ENCODE measurements at regions of chr7 and their contacts with region 1.

Region 1: GRCh38 chr7:127253281-127254162 is 781 bp upstream of the GRM8 start:
- DNase-seq: peak; percentile 50 to 63
- ATAC-seq: peak; percentile 80 to 93 (median 90)
- H3K4me3 ChIP-seq: peak overlapping the region; percentile 37 to 76 (median 68)
- H3K27ac ChIP-seq: no peak overlapping the region
- H3K4me1 ChIP-seq: peaks cover 10 to 29% (median 22%) of the 10 kb centered on the region in 9 donors
- H3K27me3 ChIP-seq: peaks cover 0 to 95% (median 90%) of the 10 kb centered on the region in 7 donors
- CTCF ChIP-seq: peak; percentile 82 to 96 (median 93)

Region 2: GRCh38 chr7:126803060-126803665 is 450.4 kb before region 1 on chr7:
- intact Hi-C with region 1: loop called in 5 of 10 experiments (anchors 5 to 10 kb)
- DNase-seq: peak in 1 of 2 donors; percentile 28
- ATAC-seq: peak in 1 of 8 donors; percentile 44
- H3K4me3 ChIP-seq: no peak overlapping the region
- H3K27ac ChIP-seq: no peak overlapping the region
- H3K4me1 ChIP-seq: no peaks in the 10 kb centered on the region
- H3K27me3 ChIP-seq: peaks cover 0 to 7% (median 0%) of the 10 kb centered on the region in 7 donors
- CTCF ChIP-seq: peak; percentile 31 to 67 (median 56)

Region 3: DNA sequence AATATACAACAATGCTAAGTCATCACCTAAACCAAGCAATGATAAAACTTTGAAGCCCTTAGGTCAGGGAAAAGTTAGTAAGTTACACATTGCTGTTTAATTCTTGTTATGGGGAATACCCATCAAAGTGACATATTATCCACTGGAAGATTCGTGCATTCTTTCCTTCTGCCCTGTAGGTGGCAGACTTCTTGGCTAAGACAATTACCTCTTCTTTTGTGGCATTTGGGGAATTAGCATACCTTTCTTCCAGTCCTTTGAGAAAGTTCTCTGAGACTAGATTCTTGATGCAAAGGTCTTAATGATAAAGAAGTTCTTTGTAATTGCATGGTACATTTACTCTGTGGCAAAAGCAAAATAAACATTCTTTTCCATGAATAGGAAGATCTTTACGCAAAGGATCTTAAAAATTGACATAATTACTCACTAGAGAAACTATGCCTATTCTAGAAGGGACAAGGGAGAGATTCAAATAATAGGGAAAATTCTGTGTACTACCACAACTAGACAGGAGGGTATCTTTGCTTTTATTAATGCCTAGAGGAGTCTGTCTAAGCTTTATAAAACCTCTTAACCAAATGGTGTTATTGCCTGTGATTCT is 396.7 kb before region 1 on chr7:
- intact Hi-C with region 1: loop called in 1 of 10 experiments (anchors 5 kb)
- DNase-seq: no peak
- ATAC-seq: no peak
- H3K4me3 ChIP-seq: no peak overlapping the region
- H3K27ac ChIP-seq: no peak overlapping the region
- H3K4me1 ChIP-seq: no peaks in the 10 kb centered on the region
- H3K27me3 ChIP-seq: peaks cover 0 to 6% (median 0%) of the 10 kb centered on the region in 7 donors
- CTCF ChIP-seq: peak in 7 of 9 donors; percentile 29 to 59 (median 40)

Region 4: DNA sequence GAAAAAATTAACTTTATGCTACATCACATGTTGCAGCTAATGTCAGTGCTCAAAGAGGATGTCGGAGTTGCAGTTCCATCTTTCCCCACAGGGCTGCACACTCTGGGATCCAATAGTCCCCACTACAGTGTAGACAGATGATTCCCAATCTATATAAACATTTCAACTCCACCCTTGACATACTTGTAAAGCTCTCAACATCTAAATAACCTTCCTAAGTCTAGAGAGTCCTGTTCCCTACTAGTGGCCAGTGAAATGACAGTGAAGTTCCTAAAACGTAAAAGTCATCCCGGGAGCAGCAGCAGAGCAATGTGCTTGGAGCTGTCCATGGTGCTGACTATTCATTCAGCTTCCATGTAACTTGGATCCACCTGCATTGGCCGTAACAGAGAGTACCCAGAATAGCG is 145.9 kb before region 1 on chr7:
- intact Hi-C with region 1: loop called in 1 of 10 experiments (anchors 10 kb)
- DNase-seq: peak in 1 of 2 donors; percentile 39
- ATAC-seq: peak in 3 of 8 donors; percentile 42 to 53 (median 52)
- H3K4me3 ChIP-seq: no peak overlapping the region
- H3K27ac ChIP-seq: no peak overlapping the region
- H3K4me1 ChIP-seq: no peaks in the 10 kb centered on the region
- H3K27me3 ChIP-seq: no peaks in the 10 kb centered on the region
- CTCF ChIP-seq: peak in 8 of 9 donors; percentile 12 to 53 (median 42)

Region 5: DNA sequence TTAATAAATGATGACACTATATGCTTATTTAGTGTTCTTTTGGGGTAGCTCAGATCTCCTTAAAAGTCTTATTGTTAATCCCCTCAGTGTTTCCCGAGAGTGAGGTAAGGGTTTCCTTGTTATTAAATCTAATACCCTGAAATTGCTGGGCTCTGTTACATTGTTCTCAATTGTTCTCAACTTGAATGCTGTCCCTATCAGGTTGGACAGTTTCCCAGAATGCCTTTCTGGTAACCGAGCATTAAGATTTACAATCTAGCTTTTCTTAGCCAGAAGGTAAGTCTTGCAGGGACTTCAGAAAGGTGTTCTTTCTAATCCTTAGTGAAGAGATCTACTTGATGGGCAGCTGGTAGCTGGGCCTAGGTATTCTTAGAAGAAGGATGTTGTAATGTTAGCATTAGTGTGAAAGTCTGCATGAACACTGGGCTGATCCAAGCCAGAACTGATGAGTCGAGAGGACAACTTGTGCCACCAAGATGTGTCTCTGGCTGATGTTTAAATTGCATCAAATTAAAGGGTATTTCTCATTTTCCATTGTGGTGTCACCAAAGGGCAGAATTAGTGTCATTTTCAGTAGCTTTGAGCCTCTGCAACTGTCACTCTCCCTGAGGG is 488.3 kb after region 1 on chr7:
- intact Hi-C with region 1: no loop called
- DNase-seq: no peak
- ATAC-seq: peak in 4 of 8 donors; percentile 41 to 68 (median 54)
- H3K4me3 ChIP-seq: no peak overlapping the region
- H3K27ac ChIP-seq: peak overlapping the region in 1 of 10 donors; percentile 23
- H3K4me1 ChIP-seq: peaks cover 0 to 18% (median 11%) of the 10 kb centered on the region in 9 donors
- H3K27me3 ChIP-seq: no peaks in the 10 kb centered on the region
- CTCF ChIP-seq: no peak